Posterior cingulate gyrus (tissue), 11 donors: ENCODE measurements at regions of chr2 and their contacts with region 1.

Region 1: GRCh38 chr2:71306762-71307161 is 24.8 kb upstream of the ZNF638 start:
- DNase-seq: no peak

Region 2: DNA sequence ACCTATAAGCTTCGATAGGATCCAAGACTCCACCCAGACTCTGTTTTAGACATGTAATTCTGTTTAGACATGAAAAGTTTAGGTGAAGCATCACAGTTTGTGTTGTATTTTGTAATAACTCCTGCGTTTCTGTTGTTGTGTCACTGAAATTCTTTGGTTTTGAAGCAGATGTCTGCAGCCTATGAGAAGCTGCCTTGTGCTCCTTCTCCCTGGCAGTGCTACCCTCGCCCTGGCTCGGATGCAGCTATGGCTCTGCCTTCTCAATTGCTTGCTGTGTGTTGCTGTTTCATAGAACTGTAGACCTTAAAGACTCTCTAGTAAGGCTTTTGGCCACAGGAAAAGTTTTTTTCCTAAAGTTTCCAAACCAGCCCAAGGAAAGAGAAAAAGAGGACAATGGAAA is 15.4 kb before region 1 on chr2:
- intact Hi-C with region 1: loop called (anchors 1 kb)
- DNase-seq: peak; percentile 32 to 95 (median 68)